ENCODE measurements at regions of chr1 and their contacts with region 1.

Region 1: DNA sequence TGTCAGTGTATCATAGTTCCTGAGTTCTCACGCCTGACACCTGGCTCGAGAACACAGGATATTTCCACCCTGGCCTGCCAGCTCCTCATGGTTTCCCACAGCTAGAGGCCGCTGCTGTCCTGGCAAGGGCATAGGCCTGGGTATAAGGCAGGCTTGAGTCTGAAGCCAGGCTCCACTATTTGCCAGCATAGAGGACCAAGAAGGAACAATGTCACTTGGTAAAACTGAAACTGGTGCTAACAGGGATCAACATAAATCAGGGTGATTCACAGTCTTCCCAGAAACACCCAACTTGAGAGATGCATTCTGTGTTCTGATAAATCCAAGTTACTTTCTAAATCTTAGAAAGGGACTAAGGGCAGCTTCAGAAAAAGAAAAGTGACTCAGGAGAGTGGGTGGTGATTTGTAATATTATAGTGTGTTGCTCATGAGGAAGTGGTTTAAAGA is 6.9 kb upstream of the S100A2 start:
- DNase-seq: peak; percentile 94
- H3K4me3 Mint-ChIP-seq: no peak overlapping the region
- H3K27ac Mint-ChIP-seq: peak overlapping the region; percentile 67
- H3K4me1 Mint-ChIP-seq: peaks cover 33% of the 10 kb centered on the region
- H3K27me3 Mint-ChIP-seq: no peaks in the 10 kb centered on the region
- CTCF ChIP-seq: peak; percentile 98

Region 2: DNA sequence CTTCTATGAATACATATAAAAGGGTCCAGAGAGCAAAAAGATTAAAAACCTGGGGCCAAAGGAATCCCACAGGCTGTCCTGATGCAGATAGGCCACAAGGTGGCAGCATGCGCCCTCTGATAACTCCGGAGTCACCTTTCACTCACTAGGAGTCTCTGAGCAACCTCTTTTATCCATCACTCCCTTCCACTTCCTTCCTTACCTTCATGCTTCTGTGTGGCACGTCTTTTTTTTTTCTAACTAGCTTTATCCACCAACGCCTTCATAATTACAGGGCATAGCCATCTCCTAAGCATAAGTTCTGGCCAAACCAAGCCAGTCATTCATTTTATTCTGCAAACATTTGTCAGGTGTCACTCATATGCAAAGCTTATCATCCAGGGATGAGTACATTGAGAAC is 220.1 kb before region 1 on chr1:
- CTCF ChIA-PET with region 1: interaction called, 54 read pairs
- POLR2A ChIA-PET with region 1: interaction called, 5 read pairs
- intact Hi-C with region 1: loop called (anchors 1 kb)
- DNase-seq: peak; percentile 87
- H3K4me3 Mint-ChIP-seq: no peak overlapping the region
- H3K27ac Mint-ChIP-seq: no peak overlapping the region
- H3K4me1 Mint-ChIP-seq: peaks cover 26% of the 10 kb centered on the region
- H3K27me3 Mint-ChIP-seq: peaks cover 40% of the 10 kb centered on the region
- CTCF ChIP-seq: peak; percentile 99

Region 3: GRCh38 chr1:153459655-153460054 is 112.9 kb before region 1 on chr1:
- CTCF ChIA-PET with region 1: no interaction called
- POLR2A ChIA-PET with region 1: no interaction called
- intact Hi-C with region 1: no loop called
- DNase-seq: no peak
- H3K4me3 Mint-ChIP-seq: no peak overlapping the region
- H3K27ac Mint-ChIP-seq: no peak overlapping the region
- H3K4me1 Mint-ChIP-seq: no peaks in the 10 kb centered on the region
- H3K27me3 Mint-ChIP-seq: peaks cover 85% of the 10 kb centered on the region
- CTCF ChIP-seq: no peak

Region 4: GRCh38 chr1:153526132-153526543 is 46.5 kb before region 1 on chr1:
- CTCF ChIA-PET with region 1: interaction called, 224 read pairs
- POLR2A ChIA-PET with region 1: interaction called, 476 read pairs
- intact Hi-C with region 1: no loop called
- DNase-seq: peak; percentile 94
- H3K4me3 Mint-ChIP-seq: peak overlapping the region; percentile 29
- H3K27ac Mint-ChIP-seq: peak overlapping the region; percentile 85
- H3K4me1 Mint-ChIP-seq: peaks cover 38% of the 10 kb centered on the region
- H3K27me3 Mint-ChIP-seq: no peaks in the 10 kb centered on the region
- CTCF ChIP-seq: no peak

Region 5: GRCh38 chr1:153561466-153561985 is 11.1 kb before region 1 on chr1:
- CTCF ChIA-PET with region 1: interaction called, 7 read pairs
- POLR2A ChIA-PET with region 1: interaction called, 24 read pairs
- intact Hi-C with region 1: no loop called
- DNase-seq: no peak
- H3K4me3 Mint-ChIP-seq: peak overlapping the region; percentile 67
- H3K27ac Mint-ChIP-seq: peak overlapping the region; percentile 92
- H3K4me1 Mint-ChIP-seq: peaks cover 48% of the 10 kb centered on the region
- H3K27me3 Mint-ChIP-seq: no peaks in the 10 kb centered on the region
- CTCF ChIP-seq: no peak

Region 6: GRCh38 chr1:153608742-153609584 is 36.4 kb after region 1 on chr1:
- CTCF ChIA-PET with region 1: interaction called, 214 read pairs
- POLR2A ChIA-PET with region 1: interaction called, 280 read pairs
- intact Hi-C with region 1: loop called (anchors 2 kb)
- DNase-seq: peak; percentile 99
- H3K4me3 Mint-ChIP-seq: peak overlapping the region; percentile 90
- H3K27ac Mint-ChIP-seq: peak overlapping the region; percentile 94
- H3K4me1 Mint-ChIP-seq: peaks cover 45% of the 10 kb centered on the region
- H3K27me3 Mint-ChIP-seq: no peaks in the 10 kb centered on the region
- CTCF ChIP-seq: no peak

Region 7: DNA sequence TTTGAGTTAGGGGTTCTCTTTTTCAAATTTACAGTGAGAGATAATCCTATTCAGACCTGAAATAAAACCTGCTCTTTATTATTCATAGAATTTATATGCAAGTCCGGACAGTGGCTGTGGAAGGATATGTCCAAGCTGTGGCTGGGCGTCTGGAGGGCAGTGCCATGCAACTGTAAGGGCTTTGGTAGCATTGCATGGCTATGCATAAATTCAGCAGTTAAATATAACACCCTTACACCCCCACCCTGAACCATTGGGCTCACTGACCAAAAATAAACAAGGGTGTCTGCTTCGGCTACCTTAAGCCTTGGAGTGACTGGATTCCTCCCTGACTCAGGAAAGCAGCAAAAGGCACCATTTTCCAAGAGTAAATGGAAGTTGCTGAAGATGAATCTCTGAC is 66.7 kb after region 1 on chr1:
- CTCF ChIA-PET with region 1: interaction called, 28 read pairs
- POLR2A ChIA-PET with region 1: interaction called, 84 read pairs
- intact Hi-C with region 1: no loop called
- DNase-seq: no peak
- H3K4me3 Mint-ChIP-seq: no peak overlapping the region
- H3K27ac Mint-ChIP-seq: no peak overlapping the region
- H3K4me1 Mint-ChIP-seq: peaks cover 27% of the 10 kb centered on the region
- H3K27me3 Mint-ChIP-seq: no peaks in the 10 kb centered on the region
- CTCF ChIP-seq: no peak

Region 8: DNA sequence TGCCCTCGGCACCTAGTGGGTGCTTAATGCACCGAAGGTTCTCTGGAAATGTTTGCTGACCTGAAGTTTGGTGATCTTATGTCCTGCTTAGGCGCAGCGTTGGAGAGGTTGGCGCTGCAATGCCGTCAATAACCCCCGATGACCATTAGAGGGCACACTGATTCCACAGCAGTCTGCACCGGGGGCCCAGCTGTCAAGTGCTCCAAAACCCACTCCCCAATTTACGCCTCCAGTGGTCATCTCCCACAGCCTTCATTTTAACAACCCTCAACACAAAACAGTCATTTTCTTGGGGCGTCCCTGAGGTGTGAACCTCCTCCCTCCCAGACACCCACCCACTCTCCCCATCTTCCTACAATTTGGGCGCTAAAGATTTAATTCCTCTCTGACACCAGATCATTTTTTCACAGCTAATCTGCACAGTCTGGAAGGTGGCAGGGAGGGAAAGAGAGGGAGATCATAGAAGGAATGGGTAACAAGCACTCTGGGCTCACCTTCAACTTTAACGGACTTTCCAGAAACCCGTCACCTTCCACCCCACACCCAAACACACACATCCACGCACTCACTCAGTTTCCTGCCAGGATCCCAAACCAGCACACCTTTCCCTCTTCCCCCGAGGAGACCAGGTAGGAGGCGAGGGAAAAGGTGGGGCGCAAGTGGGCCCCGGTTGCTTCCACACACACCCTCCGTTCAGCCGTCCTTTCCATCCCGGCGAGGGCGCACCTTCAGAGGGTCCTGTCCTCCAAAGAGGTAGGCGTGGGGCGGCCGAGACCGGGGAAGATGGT is 105.3 kb after region 1 on chr1:
- CTCF ChIA-PET with region 1: interaction called, 29 read pairs
- POLR2A ChIA-PET with region 1: no interaction called
- intact Hi-C with region 1: no loop called
- DNase-seq: peak; percentile 66
- H3K4me3 Mint-ChIP-seq: peak overlapping the region; percentile 73
- H3K27ac Mint-ChIP-seq: no peak overlapping the region
- H3K4me1 Mint-ChIP-seq: peaks cover 7% of the 10 kb centered on the region
- H3K27me3 Mint-ChIP-seq: peaks cover 41% of the 10 kb centered on the region
- CTCF ChIP-seq: peak; percentile 98

Region 9: GRCh38 chr1:153783233-153784190 is 210.9 kb after region 1 on chr1:
- CTCF ChIA-PET with region 1: no interaction called
- POLR2A ChIA-PET with region 1: no interaction called
- intact Hi-C with region 1: no loop called
- DNase-seq: peak; percentile 92
- H3K4me3 Mint-ChIP-seq: peak overlapping the region; percentile 94
- H3K27ac Mint-ChIP-seq: peak overlapping the region; percentile 84
- H3K4me1 Mint-ChIP-seq: peaks cover 4% of the 10 kb centered on the region
- H3K27me3 Mint-ChIP-seq: peaks cover 13% of the 10 kb centered on the region
- CTCF ChIP-seq: no peak

Measured in MCF 10A (cell line).